HAP-1 (cell line): ENCODE measurements at regions of chr6 and their contacts with region 1.

Region 1: DNA sequence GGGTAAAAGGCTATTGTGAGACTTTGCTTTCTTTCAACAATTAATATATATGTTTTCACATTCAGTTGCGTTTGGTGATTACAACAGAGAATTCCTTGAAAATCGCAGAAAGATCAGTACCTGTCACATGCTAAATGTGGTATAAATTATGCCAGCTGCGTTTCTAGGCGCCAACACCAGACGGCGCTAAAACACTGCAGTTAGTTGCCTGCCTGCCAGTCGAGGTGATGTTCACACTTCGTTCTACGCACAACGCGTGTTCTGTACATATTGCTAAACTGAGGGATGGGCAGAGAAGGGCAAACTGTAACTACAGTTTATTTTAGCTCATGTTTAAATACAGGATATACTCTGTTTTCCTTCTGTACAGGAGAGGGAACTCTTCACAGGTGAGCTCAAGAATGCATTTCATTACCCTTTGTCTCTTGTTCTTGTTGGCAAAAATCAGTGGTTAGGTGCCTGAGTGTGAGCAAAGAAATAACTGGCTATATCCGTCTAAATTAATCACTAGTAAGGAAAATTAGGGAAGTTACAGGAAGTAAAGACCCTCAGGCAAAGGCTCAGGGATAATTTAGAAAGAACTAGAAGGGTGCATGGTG is 100.1 kb upstream of the RGS17 start:
- DNase-seq: peak; percentile 34 to 80
- H3K4me3 ChIP-seq: no peak overlapping the region
- H3K4me1 ChIP-seq: no peaks in the 10 kb centered on the region
- H3K27me3 ChIP-seq: peaks cover 9% of the 10 kb centered on the region; the same call in 1 of the 2 replicates

Region 2: DNA sequence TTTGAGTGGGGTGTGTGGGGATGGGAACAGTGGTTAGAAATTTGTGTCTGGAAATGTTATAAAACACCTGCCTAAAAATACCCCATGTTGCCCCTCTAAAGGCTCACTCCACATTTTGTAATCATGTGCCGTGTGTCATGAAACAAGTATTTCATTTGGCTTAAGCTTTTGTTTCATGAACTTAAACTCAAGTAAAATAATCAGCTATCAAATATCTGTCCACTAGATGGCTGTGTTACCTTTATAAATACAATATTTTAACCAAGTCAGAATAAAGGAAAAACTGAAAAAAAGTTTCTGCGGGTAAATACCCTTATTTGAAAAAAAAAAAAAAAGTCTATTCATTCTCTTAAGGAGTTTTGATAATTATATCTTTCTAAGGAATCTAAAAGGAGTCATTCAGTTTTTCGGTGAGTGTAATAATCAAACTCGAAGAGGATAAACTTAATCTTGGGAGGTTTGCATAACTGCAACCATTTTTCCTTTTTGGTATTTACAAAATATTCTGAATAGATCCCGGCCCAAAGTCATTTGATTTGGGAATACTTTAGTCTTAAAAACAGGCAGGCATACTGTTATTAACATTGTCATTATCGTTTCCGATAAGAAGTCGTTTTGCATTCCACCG is 198.8 kb before region 1 on chr6:
- in situ Hi-C with region 1: loop called (anchors 25 kb)
- DNase-seq: peak in 1 of 2 experiments; percentile 21
- H3K4me3 ChIP-seq: no peak overlapping the region
- H3K4me1 ChIP-seq: no peaks in the 10 kb centered on the region
- H3K27me3 ChIP-seq: no peaks in the 10 kb centered on the region

Region 3: DNA sequence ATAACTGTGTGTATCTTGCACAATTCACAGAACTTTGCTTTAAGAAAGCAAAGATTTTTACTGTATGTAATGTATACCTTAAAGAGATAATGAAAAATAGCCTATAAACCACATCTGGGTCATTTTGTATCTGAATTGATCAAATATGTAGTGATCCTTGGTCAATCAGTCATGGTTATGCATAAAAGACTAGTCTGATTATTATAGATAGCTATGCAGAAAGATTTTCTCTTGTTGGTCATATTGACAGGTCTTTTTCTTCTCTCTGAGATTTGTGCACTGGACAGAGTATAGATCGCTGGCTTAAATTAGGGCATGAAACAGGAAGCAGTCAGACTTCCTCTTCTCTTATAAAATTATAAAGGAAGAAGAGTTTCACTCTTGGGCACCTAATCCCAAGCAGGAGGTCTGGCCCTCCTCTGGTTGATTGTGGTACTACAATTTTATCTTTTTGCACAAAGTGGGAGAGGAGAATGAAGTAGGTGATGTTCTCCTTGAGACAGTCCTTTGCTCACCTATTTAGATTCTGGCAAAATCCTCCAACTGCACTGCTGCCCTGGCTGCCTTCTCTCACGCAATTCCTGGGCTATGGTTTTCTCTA is 280.8 kb after region 1 on chr6:
- in situ Hi-C with region 1: loop called (anchors 25 kb)
- DNase-seq: peak; percentile 18 to 39
- H3K4me3 ChIP-seq: no peak overlapping the region
- H3K4me1 ChIP-seq: no peaks in the 10 kb centered on the region
- H3K27me3 ChIP-seq: no peaks in the 10 kb centered on the region

Region 4: GRCh38 chr6:153840039-153840850 is 609.1 kb after region 1 on chr6:
- in situ Hi-C with region 1: no loop called
- DNase-seq: no peak
- H3K4me3 ChIP-seq: no peak overlapping the region
- H3K4me1 ChIP-seq: no peaks in the 10 kb centered on the region; the same call in 1 of the 2 replicates
- H3K27me3 ChIP-seq: no peaks in the 10 kb centered on the region

Region 5: DNA sequence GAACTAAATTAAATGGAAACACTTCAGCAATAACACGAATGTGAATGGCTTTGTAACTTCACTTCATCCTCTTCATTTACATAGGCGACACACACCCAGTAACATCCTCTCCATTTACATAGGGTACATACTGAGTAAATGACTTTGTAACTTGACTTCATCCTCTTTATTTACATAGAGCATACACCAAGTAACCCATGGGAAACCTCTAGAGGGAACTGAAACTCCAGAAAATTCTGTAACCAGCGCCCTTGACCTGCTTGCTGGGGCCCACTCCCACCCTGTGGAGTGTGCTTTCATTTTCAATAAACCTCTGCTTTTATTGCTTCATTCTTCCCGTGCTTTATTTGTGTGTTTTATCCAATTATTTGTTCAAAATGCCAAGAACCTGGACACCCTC is 726.2 kb after region 1 on chr6:
- in situ Hi-C with region 1: loop called (anchors 25 kb)
- DNase-seq: no peak
- H3K4me3 ChIP-seq: no peak overlapping the region
- H3K4me1 ChIP-seq: no peaks in the 10 kb centered on the region
- H3K27me3 ChIP-seq: no peaks in the 10 kb centered on the region